ENCODE measurements at regions of chr17 and their contacts with region 1.

Region 1: DNA sequence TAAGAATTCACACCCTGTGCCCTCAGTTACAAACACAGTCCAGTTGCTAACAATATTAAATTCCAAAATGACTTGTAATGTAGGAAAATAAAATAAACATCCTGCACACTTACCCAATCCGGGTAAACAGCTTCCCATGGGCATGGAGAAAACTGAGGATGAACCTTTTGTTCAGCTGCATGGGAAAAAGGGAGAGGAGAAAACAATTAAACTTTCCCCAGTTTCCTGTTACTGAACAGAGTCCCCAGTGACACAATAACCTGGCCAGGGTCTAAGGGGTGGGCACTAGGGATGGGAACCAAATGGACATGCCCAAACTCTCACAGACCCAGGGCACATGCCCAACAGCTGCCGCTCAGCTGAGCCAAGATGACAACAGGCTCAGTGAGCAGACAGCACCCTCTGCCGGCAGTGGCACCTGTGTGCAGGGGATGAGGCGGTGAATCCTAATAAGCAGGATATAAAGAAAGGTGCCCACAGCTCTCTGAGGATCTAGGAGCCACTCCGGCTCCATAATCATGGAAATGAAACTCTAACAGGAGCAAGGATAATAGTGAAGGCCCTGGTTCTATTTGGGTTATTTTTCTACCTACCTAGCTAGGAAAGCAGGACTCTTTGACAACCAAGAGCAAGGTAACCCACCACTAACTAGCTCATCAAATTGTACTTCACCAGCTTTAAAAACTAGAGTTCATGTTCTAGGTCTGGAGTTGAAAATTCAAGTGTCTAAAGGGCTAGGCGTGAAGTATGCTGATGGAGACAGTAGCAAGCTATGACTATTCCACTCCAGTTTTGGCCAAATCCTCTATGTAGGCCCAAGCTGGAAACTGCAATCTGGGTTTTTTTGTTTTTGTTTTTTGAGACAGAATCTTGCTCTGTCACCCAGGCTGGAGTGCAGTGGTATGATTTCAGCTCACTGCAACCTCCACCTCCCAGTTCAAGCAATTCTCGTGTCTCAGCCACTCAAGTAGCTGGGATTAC is 58.8 kb downstream of the SMG6 start:
- DNase-seq: peak; percentile 70
- ATAC-seq: peak; percentile 72
- H3K4me3 Mint-ChIP-seq: no peak overlapping the region
- H3K27ac Mint-ChIP-seq: no peak overlapping the region
- H3K4me1 Mint-ChIP-seq: peaks cover 14% of the 10 kb centered on the region
- H3K27me3 Mint-ChIP-seq: no peaks in the 10 kb centered on the region
- CTCF ChIP-seq: peak; percentile 44

Region 2: DNA sequence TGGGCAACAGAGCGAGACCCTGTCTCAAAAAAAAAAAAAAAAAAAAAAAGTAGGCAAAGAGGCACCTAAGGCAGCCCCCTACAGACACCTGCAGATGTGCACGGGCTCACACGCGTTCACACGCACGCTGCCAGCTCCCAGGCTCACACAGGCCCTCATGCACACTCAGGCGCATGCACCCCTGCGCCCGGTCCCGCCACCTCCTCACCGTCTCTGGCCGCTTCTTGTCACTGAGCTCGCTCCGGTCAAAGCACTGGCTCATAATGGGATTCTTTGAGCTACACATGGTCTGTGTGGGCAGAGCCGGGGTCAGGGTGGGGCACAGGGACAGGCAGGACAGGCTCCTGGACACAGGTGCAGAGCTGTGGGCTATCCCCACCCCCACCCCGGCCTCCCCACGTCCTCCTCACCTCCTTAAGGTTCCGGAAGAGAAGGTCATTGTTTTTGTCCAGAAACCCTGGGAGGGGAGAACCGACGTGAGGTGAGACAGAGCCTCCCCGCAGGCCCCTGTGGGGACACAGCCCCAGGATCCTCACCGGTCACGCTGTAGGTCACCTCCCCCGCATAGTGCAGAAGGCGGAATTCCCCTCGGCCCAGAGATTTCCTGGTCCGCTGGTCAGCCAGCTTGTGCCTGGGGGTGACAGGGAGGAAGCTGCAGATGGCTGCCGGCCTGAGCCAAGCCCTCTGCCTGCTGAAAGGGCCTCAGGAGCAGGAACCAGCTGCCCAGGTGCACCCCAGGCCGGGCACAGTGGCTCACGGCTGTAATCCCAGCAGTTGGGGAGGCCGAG is 770.2 kb before region 1 on chr17:
- CTCF ChIA-PET with region 1: no interaction called
- POLR2A ChIA-PET with region 1: no interaction called
- intact Hi-C with region 1: no loop called
- DNase-seq: peak; percentile 58
- ATAC-seq: peak; percentile 64
- H3K4me3 Mint-ChIP-seq: peak overlapping the region; percentile 70
- H3K27ac Mint-ChIP-seq: peak overlapping the region; percentile 79
- H3K4me1 Mint-ChIP-seq: peaks cover 56% of the 10 kb centered on the region
- H3K27me3 Mint-ChIP-seq: no peaks in the 10 kb centered on the region
- CTCF ChIP-seq: no peak

Region 3: DNA sequence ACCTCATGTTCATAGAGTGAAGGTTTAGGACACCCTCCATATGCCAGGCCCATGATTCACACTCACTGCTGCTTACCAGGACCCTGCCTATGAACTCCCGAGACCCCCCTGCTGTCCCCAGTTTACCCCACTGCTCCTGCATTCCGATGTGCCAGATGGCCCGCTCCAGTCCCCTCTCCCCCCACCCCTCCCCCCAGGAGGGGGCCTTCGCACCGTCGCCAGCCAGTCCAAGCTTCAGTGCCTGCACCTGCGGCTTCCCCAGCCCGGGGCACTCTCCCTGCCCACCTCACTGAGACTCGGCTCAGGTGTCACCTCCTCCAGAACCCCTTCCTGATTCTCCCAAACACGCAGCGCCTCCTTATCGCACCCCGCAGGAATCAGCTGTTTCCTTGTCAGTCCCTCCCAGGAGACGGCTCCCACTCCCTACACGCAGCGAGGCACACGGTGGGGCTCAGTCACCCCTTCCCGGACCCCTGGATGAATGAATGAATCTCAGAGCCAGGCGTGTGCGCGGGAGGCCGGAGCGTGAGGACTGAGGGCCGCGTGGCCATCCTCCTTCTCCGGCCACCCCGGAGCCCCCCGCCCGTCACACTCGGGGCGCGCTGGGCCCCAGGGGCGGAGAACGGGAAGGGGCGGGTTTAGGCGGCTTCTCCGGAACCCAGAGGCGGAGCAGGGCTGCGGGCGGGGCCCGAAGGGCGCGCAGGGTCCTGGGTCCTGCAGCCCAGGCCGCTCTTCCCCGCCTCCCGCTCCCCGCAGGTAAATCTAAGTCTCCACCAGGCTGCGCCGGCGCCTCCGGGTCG is 754.0 kb before region 1 on chr17:
- CTCF ChIA-PET with region 1: no interaction called
- POLR2A ChIA-PET with region 1: no interaction called
- intact Hi-C with region 1: no loop called
- DNase-seq: peak; percentile 68
- ATAC-seq: peak; percentile 47
- H3K4me3 Mint-ChIP-seq: peak overlapping the region; percentile 84
- H3K27ac Mint-ChIP-seq: peak overlapping the region; percentile 80
- H3K4me1 Mint-ChIP-seq: peaks cover 49% of the 10 kb centered on the region
- H3K27me3 Mint-ChIP-seq: no peaks in the 10 kb centered on the region
- CTCF ChIP-seq: no peak

Region 4: DNA sequence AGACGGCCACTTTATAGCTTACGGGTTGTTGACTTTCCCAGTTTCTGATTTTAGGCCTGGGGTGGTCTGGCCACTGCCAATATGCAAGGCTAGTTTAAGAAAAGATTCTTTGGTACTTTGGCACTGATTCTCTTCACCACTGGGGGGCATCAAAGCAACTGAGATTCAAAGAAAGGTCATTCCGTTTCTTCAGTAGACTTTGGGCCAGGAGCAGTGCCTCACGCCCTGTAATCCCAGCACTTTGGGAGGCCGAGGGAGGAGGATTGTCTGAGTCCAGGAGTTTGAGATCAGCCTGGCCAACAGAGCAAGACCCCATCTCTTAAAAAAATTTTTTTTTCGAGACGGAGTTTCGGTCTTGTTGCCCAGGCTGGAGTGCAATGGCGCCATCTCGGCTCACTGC is 362.0 kb before region 1 on chr17:
- CTCF ChIA-PET with region 1: interaction called, 40 read pairs
- POLR2A ChIA-PET with region 1: no interaction called
- intact Hi-C with region 1: loop called (anchors 1 kb)
- DNase-seq: no peak
- ATAC-seq: peak; percentile 60
- H3K4me3 Mint-ChIP-seq: no peak overlapping the region
- H3K27ac Mint-ChIP-seq: no peak overlapping the region
- H3K4me1 Mint-ChIP-seq: no peaks in the 10 kb centered on the region
- H3K27me3 Mint-ChIP-seq: no peaks in the 10 kb centered on the region
- CTCF ChIP-seq: no peak

Region 5: DNA sequence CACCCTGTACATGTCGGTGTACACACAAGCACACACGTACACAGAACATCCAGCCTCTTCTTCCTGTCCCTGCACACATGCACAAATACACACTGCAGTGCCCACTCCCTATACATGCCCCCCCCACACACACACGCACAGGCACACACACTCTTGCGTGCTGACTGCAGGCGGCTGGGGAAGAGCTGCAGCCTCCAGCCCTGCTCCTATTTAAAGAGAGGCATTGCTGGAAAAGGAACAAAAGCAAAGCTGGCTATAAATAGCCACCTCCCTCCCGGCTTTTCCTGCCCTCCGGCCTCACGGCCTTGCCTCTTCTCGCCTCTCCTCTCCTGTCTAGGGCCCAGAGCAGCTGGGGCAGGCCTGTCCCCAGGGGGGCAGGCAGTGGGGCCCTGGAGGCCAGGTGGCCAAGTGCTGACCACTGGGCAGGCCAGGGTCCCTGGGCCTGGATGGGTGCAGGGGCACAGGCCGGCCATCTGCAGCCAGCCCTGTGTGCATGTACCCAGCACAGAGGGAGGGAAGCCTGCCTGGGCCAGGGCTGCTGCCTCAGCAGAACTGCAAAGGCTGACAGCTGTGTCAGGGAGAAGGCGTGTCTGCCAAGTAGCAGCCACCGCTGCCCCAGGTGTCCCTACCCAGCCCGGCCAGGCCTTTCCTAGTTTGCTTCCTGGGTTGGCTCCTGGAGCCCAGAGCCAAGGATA is 245.1 kb before region 1 on chr17:
- CTCF ChIA-PET with region 1: no interaction called
- POLR2A ChIA-PET with region 1: no interaction called
- intact Hi-C with region 1: no loop called
- DNase-seq: no peak
- ATAC-seq: no peak
- H3K4me3 Mint-ChIP-seq: no peak overlapping the region
- H3K27ac Mint-ChIP-seq: no peak overlapping the region
- H3K4me1 Mint-ChIP-seq: no peaks in the 10 kb centered on the region
- H3K27me3 Mint-ChIP-seq: peaks cover 29% of the 10 kb centered on the region
- CTCF ChIP-seq: no peak

Region 6: DNA sequence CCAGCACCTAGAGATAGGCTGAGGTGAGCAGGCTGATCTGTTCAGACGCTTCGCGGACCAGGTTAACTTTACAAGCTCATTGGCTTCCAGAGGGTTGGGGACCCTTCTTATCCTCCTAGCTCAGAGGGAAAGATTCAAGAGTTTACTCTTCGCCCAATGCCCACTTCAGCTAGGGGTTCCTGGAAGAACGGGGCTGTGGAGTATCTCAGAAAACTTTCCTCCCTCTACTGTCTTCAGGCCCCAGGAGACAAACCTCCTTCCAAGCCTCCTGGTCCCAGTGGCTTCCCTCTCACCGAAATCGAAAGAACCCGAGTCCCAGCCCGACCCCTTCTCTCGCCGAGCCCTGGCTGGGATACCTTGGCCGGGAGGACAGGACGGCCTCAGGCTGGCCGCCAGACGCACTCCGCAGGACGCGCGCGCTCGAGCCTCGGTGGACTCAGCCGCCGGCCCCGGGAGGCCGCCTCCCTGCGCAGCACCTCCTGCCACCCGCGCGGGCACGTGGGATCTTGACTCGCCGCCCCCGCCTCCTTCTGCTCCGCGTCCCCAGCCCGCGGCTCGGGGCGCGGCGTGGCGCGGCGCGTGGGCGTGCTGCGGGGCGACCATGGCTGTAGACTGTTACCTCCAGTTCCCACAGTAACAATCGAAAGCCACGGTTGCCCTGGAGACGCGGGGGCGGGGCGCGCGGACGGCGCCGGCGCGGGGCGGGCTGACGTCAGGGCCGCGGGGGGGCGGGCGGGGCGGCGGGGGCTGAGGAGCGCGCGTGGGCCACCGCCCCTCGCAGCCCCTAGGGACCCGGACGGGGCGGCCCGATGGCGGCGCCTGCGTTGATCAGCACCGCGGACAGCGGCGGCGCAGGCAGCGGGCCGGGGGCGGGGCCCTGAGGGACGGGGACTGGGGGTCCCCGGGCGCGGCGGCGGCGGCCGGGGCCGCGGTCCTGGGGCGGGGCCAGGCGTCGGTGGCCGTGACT is 195.2 kb before region 1 on chr17:
- CTCF ChIA-PET with region 1: interaction called, 228 read pairs
- POLR2A ChIA-PET with region 1: interaction called, 33 read pairs
- intact Hi-C with region 1: loop called (anchors 1 kb)
- DNase-seq: peak; percentile 91
- ATAC-seq: peak; percentile 81
- H3K4me3 Mint-ChIP-seq: peak overlapping the region; percentile 72
- H3K27ac Mint-ChIP-seq: peak overlapping the region; percentile 53
- H3K4me1 Mint-ChIP-seq: peaks cover 30% of the 10 kb centered on the region
- H3K27me3 Mint-ChIP-seq: peaks cover 15% of the 10 kb centered on the region
- CTCF ChIP-seq: no peak

Region 7: GRCh38 chr17:2094891-2095535 is 149.8 kb before region 1 on chr17:
- CTCF ChIA-PET with region 1: interaction called, 11 read pairs
- POLR2A ChIA-PET with region 1: interaction called, 18 read pairs
- intact Hi-C with region 1: no loop called
- DNase-seq: no peak
- ATAC-seq: peak; percentile 53
- H3K4me3 Mint-ChIP-seq: no peak overlapping the region
- H3K27ac Mint-ChIP-seq: no peak overlapping the region
- H3K4me1 Mint-ChIP-seq: peaks cover 18% of the 10 kb centered on the region
- H3K27me3 Mint-ChIP-seq: no peaks in the 10 kb centered on the region
- CTCF ChIP-seq: no peak

Region 8: DNA sequence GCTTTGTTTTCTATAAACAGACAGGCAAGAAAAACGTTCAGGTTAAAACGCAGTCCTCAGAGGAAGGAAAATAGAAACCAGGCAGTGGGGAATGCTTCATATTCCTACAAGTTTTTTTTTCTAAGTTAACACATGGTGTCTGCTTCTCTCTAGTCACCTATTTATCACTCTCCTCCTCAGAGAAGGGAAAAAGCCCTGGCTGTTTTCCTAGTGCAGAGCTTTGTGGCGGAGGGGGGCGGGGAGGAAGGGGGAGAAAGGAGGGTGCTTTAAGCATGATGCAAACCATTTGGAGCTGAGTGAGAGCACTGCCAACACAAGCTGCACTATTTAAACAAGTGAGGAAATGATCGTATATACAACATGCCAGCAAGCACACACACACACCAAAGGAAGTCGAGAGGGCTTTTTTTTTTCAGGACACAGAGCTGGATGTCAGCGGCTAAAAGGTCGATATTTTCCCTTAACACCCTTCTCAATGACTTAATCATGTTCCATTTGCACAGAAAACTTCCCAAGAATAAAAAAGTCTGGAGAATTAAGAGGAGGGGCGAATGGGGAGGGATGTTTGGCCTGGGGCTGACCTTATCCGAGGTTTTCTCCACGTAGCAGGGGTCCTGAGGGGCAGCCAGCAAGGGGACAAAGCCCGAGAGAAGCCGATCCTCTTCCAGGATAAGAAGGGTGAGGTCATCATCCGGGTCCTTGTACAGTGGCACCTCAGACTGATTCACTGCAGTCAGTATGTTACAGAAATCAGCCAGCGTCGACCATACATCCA is 72.6 kb before region 1 on chr17:
- CTCF ChIA-PET with region 1: interaction called, 14 read pairs
- POLR2A ChIA-PET with region 1: no interaction called
- intact Hi-C with region 1: loop called (anchors 1 kb)
- DNase-seq: no peak
- ATAC-seq: no peak
- H3K4me3 Mint-ChIP-seq: no peak overlapping the region
- H3K27ac Mint-ChIP-seq: no peak overlapping the region
- H3K4me1 Mint-ChIP-seq: no peaks in the 10 kb centered on the region
- H3K27me3 Mint-ChIP-seq: no peaks in the 10 kb centered on the region
- CTCF ChIP-seq: no peak

Region 9: GRCh38 chr17:2222901-2223616 is 21.8 kb before region 1 on chr17:
- CTCF ChIA-PET with region 1: interaction called, 11 read pairs
- POLR2A ChIA-PET with region 1: interaction called, 23 read pairs
- intact Hi-C with region 1: no loop called
- DNase-seq: no peak
- ATAC-seq: peak; percentile 66
- H3K4me3 Mint-ChIP-seq: no peak overlapping the region
- H3K27ac Mint-ChIP-seq: no peak overlapping the region
- H3K4me1 Mint-ChIP-seq: peaks cover 18% of the 10 kb centered on the region
- H3K27me3 Mint-ChIP-seq: no peaks in the 10 kb centered on the region
- CTCF ChIP-seq: no peak

Region 10: DNA sequence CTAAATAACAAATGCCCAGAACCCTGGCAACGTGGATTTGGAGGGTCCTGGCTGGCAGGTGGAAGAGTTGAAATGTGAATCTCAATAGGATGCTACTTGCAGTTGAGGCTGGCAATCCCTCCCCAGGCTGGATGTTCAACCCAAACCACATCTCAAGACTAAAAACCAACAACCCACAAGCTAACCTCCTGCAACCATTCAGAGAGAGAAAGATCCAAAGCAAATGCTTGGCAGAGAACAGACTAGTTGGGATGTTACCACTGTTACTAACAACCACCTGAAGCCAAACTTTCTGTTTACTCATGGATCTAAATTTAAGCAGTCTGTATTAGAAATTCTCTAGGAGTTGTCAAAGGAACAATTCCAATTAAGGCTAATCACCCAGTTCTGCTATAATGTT is 30.9 kb after region 1 on chr17:
- CTCF ChIA-PET with region 1: no interaction called
- POLR2A ChIA-PET with region 1: no interaction called
- intact Hi-C with region 1: no loop called
- DNase-seq: no peak
- ATAC-seq: no peak
- H3K4me3 Mint-ChIP-seq: no peak overlapping the region
- H3K27ac Mint-ChIP-seq: no peak overlapping the region
- H3K4me1 Mint-ChIP-seq: no peaks in the 10 kb centered on the region
- H3K27me3 Mint-ChIP-seq: no peaks in the 10 kb centered on the region
- CTCF ChIP-seq: no peak

Measured in activated B cell treated with CpG ODN at 0.5 μM for 24 hours (primary cell).